ENCODE measurements at regions of chr17 and their contacts with region 1.

Region 1: DNA sequence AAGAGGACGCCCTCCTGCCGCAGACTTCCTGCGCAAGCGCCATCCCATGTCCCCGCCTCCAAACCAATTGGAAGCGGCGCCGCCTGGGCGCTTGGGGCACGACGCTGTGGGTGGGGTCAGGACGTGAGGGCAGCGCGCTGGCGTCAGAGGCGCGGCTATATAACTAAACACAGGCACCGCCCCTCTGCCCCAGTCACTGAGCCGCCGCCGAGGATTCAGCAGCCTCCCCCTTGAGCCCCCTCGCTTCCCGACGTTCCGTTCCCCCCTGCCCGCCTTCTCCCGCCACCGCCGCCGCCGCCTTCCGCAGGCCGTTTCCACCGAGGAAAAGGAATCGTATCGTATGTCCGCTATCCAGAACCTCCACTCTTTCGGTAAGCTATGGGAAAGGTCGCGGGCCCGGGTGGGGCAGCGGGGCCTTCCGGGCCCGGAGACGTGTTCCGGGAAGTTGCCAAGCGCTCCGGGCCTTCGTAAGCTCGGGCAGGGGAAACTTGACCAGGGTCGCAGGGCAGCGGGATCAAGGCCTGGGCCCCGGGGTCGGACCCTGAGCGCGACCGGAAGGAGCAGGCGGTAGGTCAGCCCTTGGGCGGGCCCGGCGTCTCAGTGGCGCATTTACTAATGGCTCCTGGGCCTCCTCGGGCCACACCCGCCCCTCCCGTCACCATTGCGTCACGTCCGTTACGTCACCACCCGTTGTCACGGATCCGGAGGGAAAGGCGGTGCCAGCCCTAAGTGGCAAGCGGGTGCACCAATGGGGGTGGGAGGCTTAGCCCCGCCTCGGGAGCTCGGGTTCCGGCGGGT is at the start of gene EIF1:
- DNase-seq: peak; percentile 98 to 100
- ATAC-seq: peak; percentile 71 to 83
- H3K4me3 ChIP-seq: peak within 1 kb of the TSS; percentile 93
- H3K27ac ChIP-seq: peak within 1 kb of the TSS; percentile 95 to 98
- H3K4me1 ChIP-seq: peaks cover 29% of the 10 kb centered on the region
- CTCF ChIP-seq: no peak
- EP300 ChIP-seq: peak in 1 of 2 experiments; percentile 52; a peak in 1 of 5 replicates
- POLR2A ChIP-seq: peak; percentile 92
- RAD21 ChIP-seq: no peak
- polyA plus RNA-seq, gene EIF1: 873 and 1,224 TPM in 2 replicates

Region 2: DNA sequence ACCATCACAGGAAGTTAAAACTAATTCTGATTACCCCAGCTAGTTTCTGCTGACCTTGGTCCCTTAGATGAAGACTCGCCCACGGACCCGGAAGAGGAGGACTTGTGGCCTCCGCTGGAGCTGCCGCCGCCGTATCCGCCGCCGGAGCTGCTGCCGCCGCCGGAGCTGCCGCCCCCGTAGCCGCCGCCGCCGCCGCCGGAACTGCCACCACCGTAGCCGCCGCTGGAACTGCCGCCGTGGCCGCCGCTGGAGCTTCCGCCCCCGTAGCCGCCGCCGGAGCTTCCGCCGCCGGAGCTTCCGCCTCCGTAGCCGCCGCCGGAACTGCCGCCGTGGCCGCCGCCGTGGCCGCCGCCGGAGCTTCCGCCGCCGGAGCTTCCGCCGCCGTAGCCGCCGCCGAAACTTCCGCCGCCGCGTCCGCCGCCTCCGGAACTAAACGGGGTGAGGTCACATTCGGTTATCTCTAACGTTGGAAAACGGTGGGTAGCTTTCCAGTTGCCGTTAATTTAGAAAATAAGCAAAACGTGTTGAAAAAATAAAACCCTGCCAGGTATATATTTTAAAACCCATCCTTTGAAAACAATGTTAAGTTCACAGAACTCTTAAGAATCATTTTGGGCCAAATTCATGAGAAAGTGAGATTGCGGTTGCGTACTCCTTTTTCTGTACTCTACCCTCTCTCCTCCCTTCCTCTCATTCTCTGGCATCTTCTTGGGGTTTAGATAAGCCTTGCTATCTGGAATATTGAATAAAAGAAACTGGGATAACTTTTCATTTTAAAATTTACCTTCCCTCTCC is 870.0 kb before region 1 on chr17:
- CTCF ChIA-PET with region 1: no interaction called
- POLR2A ChIA-PET with region 1: interaction called, 16 read pairs
- DNase-seq: peak; percentile 80 to 88
- ATAC-seq: peak; percentile 93 to 95
- H3K4me3 ChIP-seq: peak overlapping the region; percentile 79
- H3K27ac ChIP-seq: peak overlapping the region; percentile 86 to 94
- H3K4me1 ChIP-seq: peaks cover 16% of the 10 kb centered on the region
- CTCF ChIP-seq: no peak
- EP300 ChIP-seq: no peak
- POLR2A ChIP-seq: peak; percentile 41
- RAD21 ChIP-seq: no peak; a peak in 1 of 5 replicates

Region 3: DNA sequence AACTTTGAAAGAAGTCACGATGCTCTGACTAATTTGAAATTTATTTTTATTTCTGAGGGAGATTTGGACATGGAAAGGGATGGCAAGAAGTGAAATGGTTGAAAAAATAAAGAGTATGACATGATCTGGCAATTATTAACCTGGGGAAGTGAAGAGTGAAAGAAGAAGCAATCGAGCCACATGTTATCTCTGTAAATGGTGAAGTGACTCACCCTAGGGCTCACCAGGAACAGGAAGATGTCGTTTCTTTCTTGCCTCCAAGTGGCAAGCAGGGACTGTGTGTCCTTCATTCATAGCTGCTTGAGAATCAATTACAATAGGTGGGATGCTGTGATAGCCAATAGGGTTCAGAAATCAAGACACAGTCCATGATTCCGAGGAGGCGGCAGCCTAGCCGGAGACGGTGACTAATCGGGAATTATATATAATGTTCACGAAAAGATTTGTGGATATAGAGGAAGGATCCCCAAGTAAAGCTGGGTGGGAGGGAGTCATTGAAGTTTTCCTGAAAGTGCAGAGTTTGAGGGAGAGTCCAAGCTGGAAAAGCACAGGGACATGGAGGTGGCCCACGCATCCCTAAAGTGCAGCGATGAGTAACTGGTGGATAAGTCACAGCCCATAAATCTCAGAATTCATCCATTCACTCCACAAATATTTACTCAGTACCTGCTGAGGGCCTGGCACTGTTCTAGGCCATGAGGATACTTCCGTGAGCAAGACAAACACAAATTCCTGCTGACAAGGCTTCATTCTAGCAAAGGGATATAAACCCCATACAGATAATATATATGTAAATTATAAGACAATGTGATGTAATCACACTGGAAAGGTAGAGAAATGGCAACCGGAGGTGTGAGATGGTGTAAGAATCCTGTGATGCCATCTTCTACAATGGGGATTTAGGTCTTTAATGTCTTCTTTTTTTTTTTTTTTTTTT is 785.5 kb before region 1 on chr17:
- CTCF ChIA-PET with region 1: no interaction called
- POLR2A ChIA-PET with region 1: interaction called, 22 read pairs
- DNase-seq: peak; percentile 94 to 96
- ATAC-seq: peak; percentile 86 to 91
- H3K4me3 ChIP-seq: peak overlapping the region; percentile 33
- H3K27ac ChIP-seq: peak overlapping the region; percentile 91 to 93
- H3K4me1 ChIP-seq: peaks cover 34% of the 10 kb centered on the region
- CTCF ChIP-seq: no peak
- EP300 ChIP-seq: peak; percentile 71 to 74; a peak in 4 of 5 replicates
- POLR2A ChIP-seq: no peak
- RAD21 ChIP-seq: peak; percentile 2 to 29; a peak in 1 of 5 replicates

Region 4: GRCh38 chr17:40922239-40922638 is 766.7 kb before region 1 on chr17:
- CTCF ChIA-PET with region 1: no interaction called
- POLR2A ChIA-PET with region 1: interaction called, 11 read pairs
- DNase-seq: peak; percentile 80 to 82
- ATAC-seq: peak; percentile 91 to 95
- H3K4me3 ChIP-seq: no peak overlapping the region
- H3K27ac ChIP-seq: peak overlapping the region; percentile 78 to 81
- H3K4me1 ChIP-seq: peaks cover 14% of the 10 kb centered on the region
- CTCF ChIP-seq: no peak
- EP300 ChIP-seq: no peak
- POLR2A ChIP-seq: no peak
- RAD21 ChIP-seq: no peak

Region 5: GRCh38 chr17:41626923-41627837 is 61.7 kb before region 1 on chr17:
- CTCF ChIA-PET with region 1: no interaction called
- POLR2A ChIA-PET with region 1: no interaction called
- DNase-seq: no peak
- ATAC-seq: no peak
- H3K4me3 ChIP-seq: no peak overlapping the region
- H3K27ac ChIP-seq: no peak overlapping the region
- H3K4me1 ChIP-seq: peaks cover 9% of the 10 kb centered on the region; the same call in 2 of the 3 replicates
- CTCF ChIP-seq: no peak
- EP300 ChIP-seq: no peak
- POLR2A ChIP-seq: no peak
- RAD21 ChIP-seq: no peak

Region 6: GRCh38 chr17:41705271-41705991 is 16.5 kb after region 1 on chr17:
- CTCF ChIA-PET with region 1: interaction called, 210 read pairs
- POLR2A ChIA-PET with region 1: interaction called, 38 read pairs
- DNase-seq: no peak
- ATAC-seq: peak; percentile 59 to 64; a peak in 5 of 6 replicates
- H3K4me3 ChIP-seq: no peak overlapping the region
- H3K27ac ChIP-seq: 0 out of 6 replicates have a peak overlapping the region, but pooled peaks of 1 of the 2 experiments have one; percentile 13
- H3K4me1 ChIP-seq: peaks cover 13% of the 10 kb centered on the region
- CTCF ChIP-seq: no peak
- EP300 ChIP-seq: no peak
- POLR2A ChIP-seq: no peak
- RAD21 ChIP-seq: no peak

Region 7: DNA sequence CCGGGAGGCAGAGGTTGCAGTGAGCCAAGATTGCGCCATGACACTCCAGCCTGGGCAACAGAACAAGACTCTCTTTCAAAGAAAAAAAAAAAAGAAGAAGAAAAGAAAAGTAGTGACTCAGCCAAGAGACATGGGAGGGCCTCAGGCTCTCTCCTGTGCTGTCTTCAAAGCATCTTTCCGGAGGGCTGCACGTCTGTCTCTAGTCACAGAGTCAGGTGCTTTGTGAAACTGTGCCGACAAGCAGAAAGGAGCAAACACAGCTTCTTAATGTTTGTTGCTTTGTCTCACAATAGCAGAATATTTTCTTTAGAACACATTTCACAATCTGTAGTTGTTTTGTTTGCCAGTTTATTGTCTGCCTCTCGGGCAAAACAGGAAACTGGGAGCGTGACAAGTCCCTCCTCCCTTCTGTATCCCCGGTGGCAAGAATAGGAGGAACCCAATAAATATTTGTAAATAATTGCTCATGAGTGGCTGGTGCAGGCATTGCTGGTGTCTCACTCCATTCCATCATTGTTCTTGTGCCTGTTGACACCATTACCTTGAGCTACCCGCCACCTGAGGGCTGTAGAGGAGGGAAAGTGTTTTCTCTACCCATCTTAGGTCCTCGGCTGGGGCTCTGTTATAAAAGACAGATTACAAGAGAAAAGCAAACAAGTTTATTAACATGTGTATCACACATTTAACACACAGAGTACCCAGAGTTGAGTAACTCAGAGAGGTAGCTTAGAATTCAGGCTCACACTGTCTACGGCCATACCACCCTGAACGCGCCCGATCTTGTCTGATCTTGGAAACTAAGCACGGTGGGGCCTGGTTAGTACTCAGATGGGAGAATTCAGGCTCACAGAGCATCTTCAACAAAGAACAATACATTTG is 28.7 kb after region 1 on chr17:
- CTCF ChIA-PET with region 1: interaction called, 210 read pairs
- POLR2A ChIA-PET with region 1: interaction called, 15 read pairs
- DNase-seq: peak in 1 of 2 experiments; percentile 70
- ATAC-seq: peak; percentile 80 to 84
- H3K4me3 ChIP-seq: no peak overlapping the region
- H3K27ac ChIP-seq: peak overlapping the region; percentile 34 to 65
- H3K4me1 ChIP-seq: peaks cover 20% of the 10 kb centered on the region
- CTCF ChIP-seq: no peak
- EP300 ChIP-seq: 0 out of 5 replicates have a peak, but pooled peaks of 1 of the 2 experiments have one; percentile 29
- POLR2A ChIP-seq: no peak
- RAD21 ChIP-seq: no peak

Region 8: GRCh38 chr17:41786227-41787020 is 97.5 kb after region 1 on chr17 and contains the start of gene JUP:
- CTCF ChIA-PET with region 1: interaction called, 9 read pairs
- POLR2A ChIA-PET with region 1: interaction called, 16 read pairs
- DNase-seq: peak; percentile 100
- ATAC-seq: peak; percentile 90 to 95
- H3K4me3 ChIP-seq: peak within 1 kb of the TSS; percentile 83
- H3K27ac ChIP-seq: peak within 1 kb of the TSS; percentile 86
- H3K4me1 ChIP-seq: peaks cover 43% of the 10 kb centered on the region
- CTCF ChIP-seq: peak; percentile 96
- EP300 ChIP-seq: no peak; a peak in 1 of 5 replicates
- POLR2A ChIP-seq: peak; percentile 85
- RAD21 ChIP-seq: peak; percentile 42 to 70; a peak in 4 of 5 replicates
- polyA plus RNA-seq, gene JUP: 54.8 and 110 TPM in 2 replicates

Region 9: DNA sequence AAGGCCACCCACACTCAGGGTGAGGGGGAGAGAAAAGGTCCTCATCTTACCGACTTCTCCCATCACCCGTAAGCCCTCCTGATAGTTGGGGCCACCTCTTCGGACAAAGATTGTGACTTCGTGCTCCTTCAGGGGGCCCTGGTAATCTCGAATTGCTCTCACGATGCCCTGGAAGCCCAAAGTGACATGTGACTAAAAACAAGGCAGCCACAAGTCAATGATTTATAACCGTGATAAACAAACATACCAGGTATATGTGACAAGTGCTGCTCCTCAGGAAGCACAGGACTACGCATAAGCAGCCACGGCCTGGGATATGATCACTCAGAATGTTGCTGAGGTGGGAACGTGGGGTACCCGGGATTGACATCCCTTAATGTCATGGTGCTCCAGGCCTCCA is 212.7 kb after region 1 on chr17:
- CTCF ChIA-PET with region 1: no interaction called
- POLR2A ChIA-PET with region 1: no interaction called
- DNase-seq: no peak
- ATAC-seq: no peak
- H3K4me3 ChIP-seq: no peak overlapping the region
- H3K27ac ChIP-seq: peak overlapping the region in 1 of 2 experiments; percentile 50; a peak in 2 of 6 replicates
- H3K4me1 ChIP-seq: peaks cover 62% of the 10 kb centered on the region
- CTCF ChIP-seq: no peak
- EP300 ChIP-seq: no peak
- POLR2A ChIP-seq: no peak
- RAD21 ChIP-seq: no peak

Measured in A549 (cell line).